Head of caudate nucleus (tissue), 42 donors: ENCODE measurements at regions of chr10 and their contacts with region 1.

Region 1: GRCh38 chr10:78302989-78303854 is 269.6 kb downstream of the RPS24 start:
- DNase-seq: peak; percentile 76 to 99 (median 95)

Region 2: DNA sequence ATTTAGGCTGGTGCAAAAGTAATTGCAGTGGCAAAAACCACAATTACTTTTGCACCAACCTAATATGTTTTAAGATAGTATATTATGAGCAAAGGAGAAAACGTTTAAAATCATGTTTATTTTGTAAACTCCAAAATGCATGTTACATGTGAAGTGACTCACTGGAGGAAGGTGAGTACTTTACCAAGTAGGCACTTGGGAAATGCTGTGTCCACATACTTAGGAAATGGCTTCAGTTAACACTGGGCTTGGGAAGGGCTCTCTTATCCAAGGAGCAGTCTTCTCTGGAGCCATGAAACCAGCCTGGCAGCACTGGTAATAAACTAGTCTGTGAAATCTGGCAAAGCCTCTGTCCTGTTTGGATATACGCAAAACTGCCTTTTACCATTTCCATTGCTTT is 265.1 kb before region 1 on chr10:
- intact Hi-C with region 1: loop called (anchors 5 kb)
- DNase-seq: no peak

Region 3: GRCh38 chr10:78263521-78263988 is 39.7 kb before region 1 on chr10:
- intact Hi-C with region 1: loop called (anchors 5 kb)
- DNase-seq: peak; percentile 51 to 94 (median 84)

Region 4: GRCh38 chr10:78657163-78657861 is 354.1 kb after region 1 on chr10:
- intact Hi-C with region 1: loop called (anchors 10 kb)
- DNase-seq: peak; percentile 33 to 91 (median 77)